Spleen (tissue), 13 donors: ENCODE measurements at regions of chr9 and their contacts with region 1.

Region 1: DNA sequence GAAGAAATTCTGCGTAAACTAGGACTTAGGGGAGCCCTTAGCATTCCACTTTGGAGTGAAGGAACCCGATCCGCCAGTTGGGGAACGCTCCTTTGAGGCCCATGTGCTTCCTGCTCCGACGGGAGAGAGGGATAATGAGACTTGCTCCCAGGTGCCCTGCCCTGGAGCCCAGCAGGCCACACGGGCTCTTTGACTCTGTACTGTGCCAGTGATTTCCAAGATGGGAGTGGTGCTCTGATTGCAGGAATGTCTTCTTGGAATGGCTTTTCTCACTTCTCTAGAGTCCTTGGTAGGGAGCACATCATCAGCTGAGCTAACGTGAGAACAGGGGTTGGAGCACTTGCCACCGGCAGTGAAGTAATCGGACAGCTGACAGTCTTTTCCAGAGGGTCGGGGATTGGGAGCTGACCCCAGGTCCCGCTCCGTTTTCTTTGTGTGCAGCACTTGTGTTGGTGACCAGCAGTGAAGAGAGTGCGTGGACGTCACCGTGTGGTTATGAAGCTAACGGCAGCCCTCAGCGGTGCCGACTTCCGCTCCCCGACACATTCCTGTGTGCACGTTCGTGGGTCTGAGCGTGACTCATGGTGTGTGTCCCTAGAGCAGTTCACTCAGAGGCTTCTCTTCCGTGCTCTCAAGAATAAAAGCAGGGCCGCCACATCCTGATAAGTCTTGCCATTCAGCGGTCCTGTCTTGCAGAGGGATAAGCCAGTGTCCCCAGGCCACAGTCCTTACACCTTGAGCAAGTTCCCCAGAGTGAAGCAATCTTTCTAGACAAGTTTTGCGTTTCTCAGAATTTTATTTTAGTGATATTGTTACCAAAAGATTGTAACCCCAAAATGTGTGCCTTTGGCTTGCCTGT is 25.6 kb downstream of the ABL1 start:
- DNase-seq: peak; percentile 80
- H3K4me3 ChIP-seq: no peak overlapping the region
- H3K27ac ChIP-seq: peak overlapping the region in 6 of 8 donors; percentile 6 to 36 (median 20)
- H3K4me1 ChIP-seq: peaks cover 0 to 43% (median 14%) of the 10 kb centered on the region in 6 donors
- H3K27me3 ChIP-seq: no peaks in the 10 kb centered on the region
- CTCF ChIP-seq: peak in 3 of 11 experiments; percentile 12 to 42 (median 34)
- POLR2A ChIP-seq: no peak

Region 2: GRCh38 chr9:130770679-130771442 is 89.8 kb before region 1 on chr9:
- intact Hi-C with region 1: loop called (anchors 5 kb)
- DNase-seq: no peak
- H3K4me3 ChIP-seq: no peak overlapping the region
- H3K27ac ChIP-seq: no peak overlapping the region
- H3K4me1 ChIP-seq: peaks cover 8 to 59% (median 39%) of the 10 kb centered on the region in 6 donors
- H3K27me3 ChIP-seq: no peaks in the 10 kb centered on the region
- CTCF ChIP-seq: peak in 10 of 11 experiments; percentile 6 to 60 (median 43)
- POLR2A ChIP-seq: no peak